ENCODE measurements at regions of chr2 and their contacts with region 1.

Region 1: DNA sequence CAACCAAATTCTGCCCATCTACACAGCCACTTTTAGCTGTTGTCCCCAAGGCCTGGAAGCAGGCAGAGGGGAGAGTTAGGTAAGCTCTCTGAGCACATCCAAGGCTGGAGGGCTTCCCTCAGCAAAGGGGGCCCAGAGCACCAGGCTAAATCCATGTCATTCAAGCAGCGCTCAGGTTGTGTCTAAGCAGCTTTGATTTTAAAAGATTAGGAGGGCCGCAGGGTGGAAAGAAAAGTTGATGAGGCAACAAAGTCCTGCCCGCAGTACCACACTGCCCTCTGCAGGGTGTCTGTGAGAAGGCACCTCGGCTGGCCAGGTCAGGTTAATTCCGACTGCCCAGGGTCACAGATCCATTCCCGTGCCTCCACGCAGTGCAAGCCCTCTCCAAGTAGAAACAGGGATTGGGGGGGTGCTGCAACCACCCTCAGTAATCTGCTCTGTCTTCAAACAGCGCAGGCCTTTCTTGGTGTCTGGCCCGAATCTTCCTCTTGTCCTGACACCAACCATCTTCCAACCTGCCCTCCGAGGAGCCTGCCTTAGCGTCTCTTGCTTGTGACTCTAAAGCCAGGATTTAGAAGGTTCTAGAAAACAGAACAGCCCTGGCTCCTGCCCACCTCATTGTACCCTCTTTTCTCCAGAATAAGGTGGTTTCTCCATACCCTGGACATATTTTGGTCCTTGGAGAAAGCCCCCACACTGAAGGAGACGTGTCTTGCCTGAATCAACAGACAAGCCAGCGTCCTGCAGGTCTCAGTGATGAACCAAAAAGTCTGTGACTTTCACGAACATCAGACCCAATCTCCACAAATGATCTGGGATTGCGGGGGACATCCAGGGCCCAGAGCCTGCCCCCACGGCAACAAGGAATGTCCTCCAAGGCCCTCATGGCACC is 289.2 kb downstream of the TNS1 start:
- DNase-seq: peak; percentile 72 to 89
- H3K4me3 ChIP-seq: no peak overlapping the region
- H3K4me3 Mint-ChIP-seq: no peak overlapping the region
- H3K27ac Mint-ChIP-seq: no peak overlapping the region
- H3K4me1 ChIP-seq: no peaks in the 10 kb centered on the region
- H3K4me1 Mint-ChIP-seq: no peaks in the 10 kb centered on the region
- H3K27me3 ChIP-seq: no peaks in the 10 kb centered on the region; the same call in 1 of the 2 replicates
- H3K27me3 Mint-ChIP-seq: peaks cover 4% of the 10 kb centered on the region
- CTCF ChIP-seq: peak; percentile 97 to 98

Region 2: GRCh38 chr2:216683846-216684507 is 1029.7 kb before region 1 on chr2:
- CTCF ChIA-PET with region 1: no interaction called
- POLR2A ChIA-PET with region 1: no interaction called
- intact Hi-C with region 1: loop called (anchors 1 kb)
- DNase-seq: peak in 1 of 2 experiments; percentile 38
- H3K4me3 ChIP-seq: no peak overlapping the region
- H3K4me3 Mint-ChIP-seq: no peak overlapping the region
- H3K27ac Mint-ChIP-seq: peak overlapping the region; percentile 49
- H3K4me1 ChIP-seq: no peaks in the 10 kb centered on the region
- H3K4me1 Mint-ChIP-seq: no peaks in the 10 kb centered on the region
- H3K27me3 ChIP-seq: no peaks in the 10 kb centered on the region
- H3K27me3 Mint-ChIP-seq: peaks cover 19% of the 10 kb centered on the region
- CTCF ChIP-seq: no peak

Region 3: DNA sequence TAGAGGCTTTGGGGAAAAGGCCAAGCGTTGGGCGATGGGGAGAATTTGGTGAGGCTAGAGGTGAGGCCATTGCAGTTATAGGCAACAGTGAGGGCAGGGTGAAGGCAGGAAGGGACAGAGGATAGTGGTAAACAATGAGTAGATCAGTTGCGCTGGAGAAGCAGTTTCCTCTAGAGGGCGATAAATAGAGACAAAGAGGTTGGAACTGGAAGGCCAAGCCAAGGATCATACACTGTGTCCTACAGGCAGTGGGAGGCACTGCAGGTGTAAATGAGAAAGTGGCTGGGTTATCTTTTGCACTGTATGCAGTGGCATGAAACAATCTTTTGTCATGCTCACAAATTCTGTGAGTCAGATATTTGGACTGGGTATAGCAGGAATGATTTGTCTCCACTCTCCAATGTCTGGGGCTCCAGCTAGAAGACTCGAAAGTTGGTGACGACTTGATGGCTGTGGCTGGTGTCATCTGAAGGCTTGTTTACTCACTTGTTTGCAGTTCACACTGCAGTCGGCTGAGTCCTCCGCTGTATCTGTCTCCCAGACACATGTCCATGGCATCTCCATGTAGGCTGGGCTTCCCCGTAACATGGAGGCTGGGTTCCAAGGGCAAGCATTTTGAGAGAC is 935.9 kb before region 1 on chr2:
- CTCF ChIA-PET with region 1: no interaction called
- POLR2A ChIA-PET with region 1: no interaction called
- intact Hi-C with region 1: loop called (anchors 1 kb)
- DNase-seq: peak; percentile 74 to 77
- H3K4me3 ChIP-seq: no peak overlapping the region
- H3K4me3 Mint-ChIP-seq: no peak overlapping the region
- H3K27ac Mint-ChIP-seq: no peak overlapping the region
- H3K4me1 ChIP-seq: 0 out of 2 replicates have a peak, but pooled peaks cover 2% of the 10 kb centered on the region
- H3K4me1 Mint-ChIP-seq: no peaks in the 10 kb centered on the region
- H3K27me3 ChIP-seq: no peaks in the 10 kb centered on the region
- H3K27me3 Mint-ChIP-seq: peaks cover 7% of the 10 kb centered on the region
- CTCF ChIP-seq: peak; percentile 90 to 93

Region 4: DNA sequence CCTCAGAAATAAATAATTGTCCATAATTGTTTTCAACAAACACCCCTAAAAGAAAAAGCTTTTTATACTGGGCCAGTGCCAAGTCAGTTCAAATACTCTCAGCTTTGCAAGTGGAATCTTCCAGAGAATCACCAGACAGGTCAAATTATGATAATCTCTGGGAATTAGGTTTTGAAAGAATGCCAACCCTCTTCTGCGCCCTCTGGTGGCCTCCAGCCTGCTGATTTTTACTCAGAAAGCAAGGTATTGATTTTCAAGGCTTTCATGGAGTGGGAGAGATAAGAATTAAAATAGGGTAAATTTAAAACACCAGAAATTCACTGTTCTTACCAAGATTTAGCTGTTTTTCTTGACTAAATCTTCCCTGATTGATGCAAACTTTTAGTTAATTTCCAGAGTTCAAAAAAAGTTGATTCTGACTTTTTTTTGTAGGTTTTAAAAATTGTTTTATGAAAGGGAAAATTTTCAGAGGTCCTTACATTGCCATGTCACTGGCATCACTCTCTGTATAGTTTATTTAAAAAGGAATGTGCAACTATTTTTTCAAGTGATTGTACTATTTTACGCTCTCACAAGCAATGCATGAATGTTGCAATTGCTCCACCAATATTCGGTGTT is 570.9 kb before region 1 on chr2:
- CTCF ChIA-PET with region 1: no interaction called
- POLR2A ChIA-PET with region 1: no interaction called
- intact Hi-C with region 1: loop called (anchors 10 kb)
- DNase-seq: peak; percentile 51 to 69
- H3K4me3 ChIP-seq: no peak overlapping the region
- H3K4me3 Mint-ChIP-seq: no peak overlapping the region
- H3K27ac Mint-ChIP-seq: no peak overlapping the region
- H3K4me1 ChIP-seq: no peaks in the 10 kb centered on the region
- H3K4me1 Mint-ChIP-seq: no peaks in the 10 kb centered on the region
- H3K27me3 ChIP-seq: no peaks in the 10 kb centered on the region
- H3K27me3 Mint-ChIP-seq: peaks cover 7% of the 10 kb centered on the region
- CTCF ChIP-seq: peak; percentile 67 to 86

Region 5: DNA sequence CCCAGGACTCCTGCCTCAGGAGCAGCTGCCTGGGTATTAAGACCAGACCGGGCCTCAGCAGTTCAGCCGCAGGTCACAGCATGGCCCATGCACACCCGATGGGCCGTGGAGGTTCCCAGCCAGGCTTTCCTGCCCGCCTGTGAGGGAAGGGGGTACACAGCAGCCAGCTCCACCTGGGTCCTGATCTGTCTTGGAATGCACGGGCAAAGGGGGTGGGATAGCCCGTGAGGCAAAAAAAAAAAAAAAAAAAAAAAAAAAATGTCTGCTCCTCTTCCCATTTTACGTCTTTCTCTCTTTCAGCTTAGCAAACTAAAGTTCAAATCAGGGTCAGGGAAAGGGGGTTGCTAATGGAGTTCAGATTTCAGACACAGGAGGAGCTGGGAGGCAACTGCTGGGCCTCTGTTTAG is 96.0 kb before region 1 on chr2:
- CTCF ChIA-PET with region 1: no interaction called
- POLR2A ChIA-PET with region 1: no interaction called
- intact Hi-C with region 1: no loop called
- DNase-seq: no peak
- H3K4me3 ChIP-seq: no peak overlapping the region
- H3K4me3 Mint-ChIP-seq: no peak overlapping the region
- H3K27ac Mint-ChIP-seq: no peak overlapping the region
- H3K4me1 ChIP-seq: peaks cover 14% of the 10 kb centered on the region
- H3K4me1 Mint-ChIP-seq: peaks cover 10% of the 10 kb centered on the region
- H3K27me3 ChIP-seq: no peaks in the 10 kb centered on the region
- H3K27me3 Mint-ChIP-seq: no peaks in the 10 kb centered on the region
- CTCF ChIP-seq: no peak

Region 6: DNA sequence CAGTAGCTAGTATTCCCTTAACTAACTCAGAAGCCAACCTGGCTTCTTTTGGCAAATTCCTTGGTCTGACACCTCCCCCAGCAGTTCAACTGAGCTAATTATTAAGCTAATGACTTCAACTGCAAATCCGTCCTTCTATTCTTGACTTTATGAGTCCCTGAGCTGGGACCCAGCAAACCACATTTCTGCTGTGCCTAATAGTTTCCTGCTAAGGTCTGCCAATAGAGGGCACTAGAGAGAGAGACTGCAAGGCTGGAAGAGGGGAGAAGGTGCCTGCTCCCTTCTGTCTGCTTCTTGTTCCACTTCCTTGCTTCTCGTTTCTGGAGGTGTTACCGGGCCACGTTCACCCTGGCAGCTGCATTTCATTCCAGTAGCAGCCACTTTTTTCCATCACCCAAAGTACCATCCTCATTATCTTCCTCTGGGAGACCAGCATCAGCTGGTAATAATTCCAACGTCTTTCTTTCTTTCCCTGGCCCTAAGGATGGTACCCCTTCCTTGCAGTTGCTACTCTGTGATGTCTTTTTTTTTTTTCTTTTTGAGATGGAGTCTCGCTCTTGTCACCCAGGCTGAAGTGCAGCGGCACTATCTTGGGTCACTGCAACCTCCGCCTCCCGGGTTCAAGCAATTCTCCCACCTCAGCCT is 62.8 kb before region 1 on chr2:
- CTCF ChIA-PET with region 1: interaction called, 31 read pairs
- POLR2A ChIA-PET with region 1: no interaction called
- intact Hi-C with region 1: loop called (anchors 1 kb)
- DNase-seq: peak; percentile 77 to 85
- H3K4me3 ChIP-seq: no peak overlapping the region
- H3K4me3 Mint-ChIP-seq: no peak overlapping the region
- H3K27ac Mint-ChIP-seq: no peak overlapping the region
- H3K4me1 ChIP-seq: peaks cover 7% of the 10 kb centered on the region
- H3K4me1 Mint-ChIP-seq: peaks cover 10% of the 10 kb centered on the region
- H3K27me3 ChIP-seq: no peaks in the 10 kb centered on the region
- H3K27me3 Mint-ChIP-seq: no peaks in the 10 kb centered on the region
- CTCF ChIP-seq: peak; percentile 67 to 85

Region 7: GRCh38 chr2:217685255-217685605 is 28.4 kb before region 1 on chr2:
- CTCF ChIA-PET with region 1: interaction called, 11 read pairs
- POLR2A ChIA-PET with region 1: no interaction called
- intact Hi-C with region 1: no loop called
- DNase-seq: peak; percentile 91 to 93
- H3K4me3 ChIP-seq: no peak overlapping the region
- H3K4me3 Mint-ChIP-seq: peak overlapping the region; percentile 58
- H3K27ac Mint-ChIP-seq: peak overlapping the region; percentile 89
- H3K4me1 ChIP-seq: peaks cover 24% of the 10 kb centered on the region
- H3K4me1 Mint-ChIP-seq: peaks cover 22% of the 10 kb centered on the region
- H3K27me3 ChIP-seq: no peaks in the 10 kb centered on the region
- H3K27me3 Mint-ChIP-seq: no peaks in the 10 kb centered on the region
- CTCF ChIP-seq: no peak

Region 8: DNA sequence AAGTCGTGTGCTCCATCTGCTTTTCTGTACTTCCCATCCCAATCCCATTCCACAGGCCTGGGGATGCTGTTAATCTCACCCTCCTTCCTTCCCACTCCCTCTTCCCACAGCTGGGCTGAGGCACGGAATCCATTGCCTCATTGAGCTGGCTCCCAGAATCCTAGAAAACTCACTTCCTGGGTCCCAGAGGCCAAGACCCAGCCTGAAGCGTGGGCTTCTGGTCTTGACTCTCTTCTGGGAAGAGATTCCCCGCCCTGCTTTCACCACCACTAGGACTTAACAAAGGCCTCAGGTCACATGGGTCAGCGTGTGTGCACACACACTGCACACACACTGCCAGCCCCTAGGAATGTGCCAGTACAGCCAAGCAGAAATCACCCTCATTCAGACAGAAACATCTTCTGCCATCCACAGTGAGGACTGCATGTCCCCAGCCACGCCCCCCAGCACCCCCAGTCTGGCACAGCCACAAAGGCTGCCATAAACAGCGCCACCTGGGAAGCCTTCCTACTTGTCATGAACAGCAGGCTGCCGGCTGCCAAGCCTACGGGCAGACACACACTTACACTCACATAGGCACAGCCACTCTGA is 123.4 kb after region 1 on chr2:
- CTCF ChIA-PET with region 1: no interaction called
- POLR2A ChIA-PET with region 1: no interaction called
- intact Hi-C with region 1: no loop called
- DNase-seq: no peak
- H3K4me3 ChIP-seq: no peak overlapping the region
- H3K4me3 Mint-ChIP-seq: no peak overlapping the region
- H3K27ac Mint-ChIP-seq: no peak overlapping the region
- H3K4me1 ChIP-seq: no peaks in the 10 kb centered on the region
- H3K4me1 Mint-ChIP-seq: no peaks in the 10 kb centered on the region
- H3K27me3 ChIP-seq: no peaks in the 10 kb centered on the region
- H3K27me3 Mint-ChIP-seq: no peaks in the 10 kb centered on the region
- CTCF ChIP-seq: no peak

Measured in Caco-2 (cell line).